Caco-2 (cell line): ENCODE measurements at regions of chr1 and their contacts with region 1.

Region 1: DNA sequence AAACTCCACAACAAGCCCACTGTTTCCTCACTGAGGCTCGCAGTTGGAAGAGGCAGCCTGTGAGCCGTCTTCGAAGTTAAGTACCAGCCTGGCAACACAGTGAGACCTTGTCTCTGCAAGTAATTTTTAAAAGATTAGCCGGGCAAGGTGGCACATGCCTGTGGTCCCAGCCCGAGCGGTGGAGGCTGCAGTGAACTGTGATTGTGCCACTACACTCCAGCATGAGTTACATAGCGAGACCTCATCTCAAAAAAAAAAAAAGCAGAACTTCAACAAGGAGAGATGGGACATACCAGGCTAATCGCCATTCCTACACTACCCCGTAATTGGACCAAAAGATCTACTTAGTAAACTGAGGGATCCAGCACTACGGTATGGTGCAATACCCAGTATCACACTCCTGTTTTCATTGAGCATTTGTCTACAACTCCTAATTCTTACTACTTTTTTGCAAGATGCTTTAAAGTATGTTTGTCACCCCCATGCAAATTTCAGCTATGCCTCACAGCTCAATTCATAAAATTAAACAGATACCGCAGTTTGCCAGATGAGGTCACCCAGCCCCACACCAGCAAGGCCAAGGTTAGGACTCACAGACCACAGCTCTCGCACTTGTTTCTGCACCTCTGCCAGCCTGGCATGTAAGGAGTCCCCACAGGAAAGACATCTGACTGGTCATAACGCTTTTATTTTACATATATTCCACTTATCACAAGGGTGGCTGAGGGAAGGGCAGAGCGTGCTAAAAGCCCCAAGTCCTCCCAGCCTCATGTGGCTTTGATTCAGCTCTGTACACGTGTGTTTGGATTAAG is 21.0 kb downstream of the SDE2 start:
- DNase-seq: no peak
- H3K4me3 ChIP-seq: no peak overlapping the region
- H3K4me3 Mint-ChIP-seq: no peak overlapping the region
- H3K27ac Mint-ChIP-seq: no peak overlapping the region
- H3K4me1 ChIP-seq: no peaks in the 10 kb centered on the region
- H3K4me1 Mint-ChIP-seq: no peaks in the 10 kb centered on the region
- H3K27me3 ChIP-seq: no peaks in the 10 kb centered on the region
- H3K27me3 Mint-ChIP-seq: no peaks in the 10 kb centered on the region
- CTCF ChIP-seq: no peak

Region 2: DNA sequence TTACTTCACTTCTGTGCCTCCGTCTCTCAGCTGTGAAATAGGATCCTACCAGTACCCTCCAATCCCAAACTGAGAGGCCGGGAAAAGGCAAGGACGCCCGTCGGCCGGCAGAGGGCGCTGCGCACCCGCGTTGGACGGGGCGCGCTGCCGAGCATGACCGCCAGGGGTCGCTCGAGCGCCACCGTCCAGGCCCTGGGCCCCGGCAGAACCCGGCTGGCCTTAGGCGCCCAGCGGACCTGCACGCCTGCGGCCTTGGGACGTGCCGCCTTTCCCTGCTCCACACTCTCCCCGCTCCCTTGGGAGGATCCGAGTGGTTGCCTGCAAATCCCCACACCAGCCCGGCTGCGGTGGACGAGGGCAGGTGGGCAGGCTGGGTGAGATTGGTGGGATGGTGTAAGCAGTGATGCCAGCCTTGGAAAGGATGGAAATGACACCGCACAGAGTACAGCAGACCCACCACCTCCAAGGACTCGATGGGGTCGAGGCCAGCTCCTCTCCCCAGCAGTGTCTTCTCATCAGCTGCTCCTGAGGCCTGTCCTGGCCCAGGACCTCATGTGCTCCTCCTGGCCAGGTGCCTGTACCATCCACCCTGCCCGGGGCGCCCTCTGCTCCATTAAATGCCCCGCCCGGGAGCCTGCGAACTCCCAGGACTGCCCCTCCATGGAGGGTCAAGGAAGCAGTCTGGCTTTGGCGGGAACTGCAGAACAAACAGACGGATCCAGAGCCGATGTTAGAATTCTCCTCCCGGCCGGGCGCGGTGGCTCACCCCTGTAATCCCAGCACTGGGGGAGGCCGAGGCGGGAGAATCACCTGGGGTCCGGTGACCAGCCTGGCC is 502.9 kb before region 1 on chr1:
- CTCF ChIA-PET with region 1: interaction called, 4 read pairs
- POLR2A ChIA-PET with region 1: no interaction called
- intact Hi-C with region 1: loop called (anchors 1 kb)
- DNase-seq: peak in 1 of 2 experiments; percentile 81
- H3K4me3 ChIP-seq: no peak overlapping the region
- H3K4me3 Mint-ChIP-seq: no peak overlapping the region
- H3K27ac Mint-ChIP-seq: no peak overlapping the region
- H3K4me1 ChIP-seq: peaks cover 11% of the 10 kb centered on the region
- H3K4me1 Mint-ChIP-seq: no peaks in the 10 kb centered on the region
- H3K27me3 ChIP-seq: no peaks in the 10 kb centered on the region
- H3K27me3 Mint-ChIP-seq: no peaks in the 10 kb centered on the region
- CTCF ChIP-seq: peak; percentile 98 to 100

Region 3: DNA sequence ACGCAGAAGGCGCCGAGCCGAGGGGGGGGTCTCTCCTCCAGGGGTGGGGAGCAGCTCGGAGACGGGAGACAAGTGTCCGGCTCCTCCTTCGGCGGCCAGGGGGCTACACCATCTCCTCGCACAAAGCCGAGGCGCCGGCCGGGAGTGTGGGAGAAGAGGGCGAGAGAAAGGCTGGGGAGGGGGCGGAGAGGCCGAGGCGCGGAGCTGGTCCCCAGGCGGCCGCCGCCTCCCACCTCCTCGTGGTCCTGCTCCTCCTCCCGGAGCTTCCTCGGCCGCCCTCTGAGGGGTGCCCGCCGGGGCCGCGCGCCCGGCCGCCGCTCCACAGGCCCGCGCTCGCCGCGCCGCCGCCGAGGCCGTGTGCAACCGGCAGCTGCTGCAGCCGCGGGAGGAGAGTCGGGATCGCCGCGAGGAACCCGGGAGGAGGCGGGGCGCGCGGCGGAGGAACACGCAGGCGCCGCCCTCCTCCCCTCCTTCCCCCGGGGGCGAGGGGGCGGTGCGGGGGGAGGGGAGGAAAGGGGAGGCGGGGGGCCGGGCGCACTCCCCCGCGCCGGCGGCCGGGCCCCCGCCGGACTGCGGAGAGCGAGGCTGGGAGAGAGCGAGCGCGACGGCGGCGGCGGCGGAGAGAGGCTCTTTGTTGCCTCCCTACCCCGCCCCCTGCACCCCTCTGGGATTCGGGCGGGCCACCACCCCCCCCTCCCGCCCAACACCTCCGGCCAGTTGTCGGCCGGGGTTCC is 325.2 kb before region 1 on chr1 and contains the start of gene ENAH:
- CTCF ChIA-PET with region 1: no interaction called
- POLR2A ChIA-PET with region 1: no interaction called
- intact Hi-C with region 1: loop called (anchors 10 kb)
- DNase-seq: peak; percentile 81 to 86
- H3K4me3 ChIP-seq: peak within 1 kb of the TSS; percentile 94
- H3K4me3 Mint-ChIP-seq: peak within 1 kb of the TSS; percentile 99
- H3K27ac Mint-ChIP-seq: peak within 1 kb of the TSS; percentile 96
- H3K4me1 ChIP-seq: peaks cover 13% of the 10 kb centered on the region
- H3K4me1 Mint-ChIP-seq: peaks cover 24% of the 10 kb centered on the region
- H3K27me3 ChIP-seq: no peaks in the 10 kb centered on the region
- H3K27me3 Mint-ChIP-seq: no peaks in the 10 kb centered on the region
- CTCF ChIP-seq: no peak
- total RNA-seq, gene ENAH: 78.0 and 80.0 TPM in 2 replicates

Region 4: GRCh38 chr1:225863167-225863566 is 115.0 kb before region 1 on chr1:
- CTCF ChIA-PET with region 1: no interaction called
- POLR2A ChIA-PET with region 1: no interaction called
- intact Hi-C with region 1: loop called (anchors 5 kb)
- DNase-seq: no peak
- H3K4me3 ChIP-seq: no peak overlapping the region
- H3K4me3 Mint-ChIP-seq: no peak overlapping the region
- H3K27ac Mint-ChIP-seq: no peak overlapping the region
- H3K4me1 ChIP-seq: peaks cover 3% of the 10 kb centered on the region; the same call in 1 of the 2 replicates
- H3K4me1 Mint-ChIP-seq: peaks cover 7% of the 10 kb centered on the region
- H3K27me3 ChIP-seq: no peaks in the 10 kb centered on the region
- H3K27me3 Mint-ChIP-seq: no peaks in the 10 kb centered on the region
- CTCF ChIP-seq: no peak